ENCODE measurements at regions of chr17 and their contacts with region 1.

Region 1: GRCh38 chr17:63834431-63835166 is 7.1 kb upstream of the FTSJ3 start:
- DNase-seq: peak; percentile 72
- H3K4me3 ChIP-seq: no peak overlapping the region
- H3K27ac ChIP-seq: no peak overlapping the region
- H3K4me1 ChIP-seq: peaks cover 36% of the 10 kb centered on the region
- H3K27me3 ChIP-seq: no peaks in the 10 kb centered on the region
- CTCF ChIP-seq: peak; percentile 76

Region 2: GRCh38 chr17:63425482-63425881 is 409.1 kb before region 1 on chr17:
- CTCF ChIA-PET with region 1: no interaction called
- dilution Hi-C with region 1: no loop called
- in situ Hi-C with region 1: no loop called
- intact Hi-C with region 1: loop called (anchors 10 kb)
- DNase-seq: peak; percentile 58
- H3K4me3 ChIP-seq: no peak overlapping the region
- H3K27ac ChIP-seq: no peak overlapping the region
- H3K4me1 ChIP-seq: peaks cover 18% of the 10 kb centered on the region
- H3K27me3 ChIP-seq: no peaks in the 10 kb centered on the region
- CTCF ChIP-seq: peak; percentile 88 to 98

Region 3: GRCh38 chr17:63519972-63520882 is 314.4 kb before region 1 on chr17:
- CTCF ChIA-PET with region 1: no interaction called
- dilution Hi-C with region 1: no loop called
- in situ Hi-C with region 1: no loop called
- intact Hi-C with region 1: no loop called
- DNase-seq: no peak
- H3K4me3 ChIP-seq: no peak overlapping the region
- H3K27ac ChIP-seq: no peak overlapping the region
- H3K4me1 ChIP-seq: no peaks in the 10 kb centered on the region
- H3K27me3 ChIP-seq: no peaks in the 10 kb centered on the region
- CTCF ChIP-seq: no peak

Region 4: GRCh38 chr17:63697341-63698286 is 137.0 kb before region 1 on chr17:
- CTCF ChIA-PET with region 1: no interaction called
- dilution Hi-C with region 1: no loop called
- in situ Hi-C with region 1: no loop called
- intact Hi-C with region 1: loop called (anchors 2 kb)
- DNase-seq: peak; percentile 29
- H3K4me3 ChIP-seq: no peak overlapping the region
- H3K27ac ChIP-seq: no peak overlapping the region
- H3K4me1 ChIP-seq: no peaks in the 10 kb centered on the region
- H3K27me3 ChIP-seq: no peaks in the 10 kb centered on the region
- CTCF ChIP-seq: peak; percentile 51 to 68

Region 5: DNA sequence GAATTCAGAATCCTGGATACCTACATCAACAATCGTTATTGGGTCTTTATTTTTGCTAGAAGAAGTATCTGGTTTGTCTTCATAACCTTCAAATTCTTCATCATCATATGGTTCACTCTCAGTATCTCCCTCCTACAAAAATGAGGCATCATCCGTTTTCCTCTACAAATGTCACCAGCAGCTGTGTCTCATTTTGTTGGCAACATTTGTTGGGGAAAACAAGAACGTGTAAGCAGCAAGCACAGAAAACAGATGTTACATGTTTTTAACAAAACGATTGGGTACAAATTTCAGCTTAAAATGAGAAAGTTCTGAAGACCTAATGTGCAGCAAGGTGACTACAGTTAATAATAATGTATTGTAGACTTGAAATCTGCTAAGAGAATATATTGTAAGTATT is 69.9 kb before region 1 on chr17:
- CTCF ChIA-PET with region 1: no interaction called
- dilution Hi-C with region 1: loop called (anchors 5 kb)
- in situ Hi-C with region 1: no loop called
- intact Hi-C with region 1: no loop called
- DNase-seq: no peak
- H3K4me3 ChIP-seq: no peak overlapping the region
- H3K27ac ChIP-seq: no peak overlapping the region
- H3K4me1 ChIP-seq: no peaks in the 10 kb centered on the region
- H3K27me3 ChIP-seq: no peaks in the 10 kb centered on the region
- CTCF ChIP-seq: no peak